ENCODE measurements at regions of chr2 and their contacts with region 1.

Region 1: DNA sequence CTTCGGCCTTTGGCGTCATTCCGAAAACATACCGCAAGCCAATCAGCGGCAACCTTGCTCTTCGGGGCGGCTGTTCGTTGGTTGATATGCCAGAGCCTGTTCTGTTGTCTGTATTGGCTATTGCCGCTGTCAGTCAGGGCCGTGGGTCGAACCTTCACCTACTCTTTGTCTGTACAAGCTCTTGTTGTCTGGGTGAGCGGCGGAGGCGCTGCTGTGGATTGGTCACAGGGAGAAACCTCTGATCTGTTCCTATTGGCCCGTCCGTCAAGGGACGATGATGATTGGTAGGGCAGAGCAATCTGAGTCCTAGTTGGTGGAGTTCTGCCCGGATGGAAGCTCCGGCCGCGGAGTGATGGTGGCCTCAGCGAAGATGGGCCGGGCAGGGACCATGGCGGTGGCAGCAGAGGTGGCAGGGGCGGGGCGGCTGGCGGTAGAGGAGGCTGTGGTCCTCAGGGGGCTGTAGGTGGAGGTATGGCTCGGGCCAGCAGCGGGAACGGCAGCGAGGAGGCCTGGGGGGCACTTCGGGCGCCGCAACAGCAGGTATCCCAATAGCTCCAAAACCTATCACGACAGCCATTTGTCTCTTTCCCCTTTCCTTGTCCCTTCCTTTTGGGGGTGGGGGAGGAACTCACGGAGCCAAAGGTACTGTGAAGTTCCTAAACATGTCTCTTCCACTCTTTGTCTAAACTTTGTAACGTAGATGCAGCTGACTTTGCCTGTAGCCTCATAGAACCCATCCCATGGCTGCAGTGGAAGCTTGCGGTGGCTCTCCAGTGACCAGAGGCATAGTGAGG is at the start of gene WBP1:
- DNase-seq: peak; percentile 93
- ATAC-seq: peak; percentile 89
- H3K4me3 Mint-ChIP-seq: peak within 1 kb of the TSS; percentile 99
- H3K27ac Mint-ChIP-seq: peak within 1 kb of the TSS; percentile 93
- H3K4me1 Mint-ChIP-seq: peaks cover 48% of the 10 kb centered on the region
- H3K27me3 Mint-ChIP-seq: no peaks in the 10 kb centered on the region
- total RNA-seq, gene WBP1: 66.8 to 69.6 TPM

Region 2: GRCh38 chr2:74080346-74080745 is 378.0 kb before region 1 on chr2:
- POLR2A ChIA-PET with region 1: no interaction called
- DNase-seq: no peak
- ATAC-seq: no peak
- H3K4me3 Mint-ChIP-seq: no peak overlapping the region
- H3K27ac Mint-ChIP-seq: no peak overlapping the region
- H3K4me1 Mint-ChIP-seq: peaks cover 4% of the 10 kb centered on the region
- H3K27me3 Mint-ChIP-seq: no peaks in the 10 kb centered on the region

Region 3: DNA sequence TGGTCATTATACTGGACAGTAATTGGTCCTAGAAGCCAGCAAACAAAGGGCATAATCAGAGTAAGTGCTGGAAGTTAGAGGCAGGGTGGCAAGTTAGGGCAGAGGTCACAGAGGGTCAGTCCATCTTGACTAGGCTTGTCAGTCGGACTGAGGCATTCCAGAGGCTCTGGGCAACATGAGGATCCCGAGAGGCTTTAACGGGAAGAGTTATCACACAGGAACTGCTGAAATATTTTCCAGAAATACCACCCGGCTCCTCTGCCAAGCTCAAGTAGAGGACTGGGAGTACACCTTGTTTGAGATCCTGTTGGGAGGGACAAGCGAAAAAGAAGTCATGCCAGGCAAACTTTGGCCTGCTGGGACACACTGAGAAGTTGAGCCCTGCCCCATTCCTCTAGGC is 50.6 kb before region 1 on chr2:
- POLR2A ChIA-PET with region 1: no interaction called
- DNase-seq: no peak
- ATAC-seq: no peak
- H3K4me3 Mint-ChIP-seq: no peak overlapping the region
- H3K27ac Mint-ChIP-seq: no peak overlapping the region
- H3K4me1 Mint-ChIP-seq: peaks cover 4% of the 10 kb centered on the region
- H3K27me3 Mint-ChIP-seq: peaks cover 24% of the 10 kb centered on the region

Region 4: GRCh38 chr2:74421221-74421870 is 37.0 kb before region 1 on chr2 and contains the starts of genes C2orf81 and WDR54:
- POLR2A ChIA-PET with region 1: interaction called, 58 read pairs
- DNase-seq: peak; percentile 99
- ATAC-seq: peak; percentile 80
- H3K4me3 Mint-ChIP-seq: peak within 1 kb of the TSS; percentile 99
- H3K27ac Mint-ChIP-seq: peak within 1 kb of the TSS; percentile 99
- H3K4me1 Mint-ChIP-seq: peaks cover 19% of the 10 kb centered on the region
- H3K27me3 Mint-ChIP-seq: no peaks in the 10 kb centered on the region
- total RNA-seq, gene C2orf81: 3.7 to 5.8 TPM
- total RNA-seq, gene WDR54: 88.9 to 94.4 TPM

Region 5: DNA sequence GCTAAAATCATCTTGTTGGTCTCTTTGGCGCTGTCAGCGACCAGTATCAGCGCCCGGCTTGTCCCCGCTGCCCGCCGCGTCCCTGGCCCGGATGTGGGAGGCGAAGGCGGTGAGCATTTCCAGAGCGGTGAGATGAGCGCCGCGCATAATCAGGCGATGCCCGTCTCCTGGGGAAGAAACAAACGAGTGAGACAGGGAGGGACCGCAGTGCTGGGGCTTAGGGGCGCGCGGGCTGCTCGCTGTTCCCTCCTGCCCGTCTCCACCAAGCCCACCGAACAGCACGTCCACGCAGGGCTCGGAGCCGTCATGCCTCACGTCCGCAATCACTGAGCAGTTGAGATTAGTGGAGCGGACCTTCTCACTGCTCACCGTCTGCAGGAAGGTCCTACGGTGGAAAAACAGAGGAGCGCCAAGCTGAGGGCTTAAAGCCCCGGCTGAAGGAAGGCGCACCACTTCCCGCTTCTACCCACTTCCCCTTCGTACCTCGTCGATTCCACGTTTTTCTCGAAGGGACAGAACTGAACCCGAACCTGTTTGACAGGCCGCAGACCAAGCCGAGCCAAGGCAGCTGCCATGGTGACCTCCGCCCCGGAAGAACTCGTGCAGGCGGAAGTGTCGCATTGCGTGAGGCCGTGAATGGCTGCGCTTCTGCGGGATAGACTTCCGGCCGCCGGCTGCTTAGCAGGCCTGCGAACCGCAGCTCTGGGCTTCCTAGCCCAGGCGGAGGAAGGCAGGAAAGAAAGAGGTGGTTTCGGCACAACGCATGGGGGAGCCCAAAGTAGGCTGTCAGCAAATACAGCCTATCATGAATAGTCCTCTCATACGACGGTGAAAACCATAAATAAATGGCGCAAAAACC is 14.0 kb after region 1 on chr2 and contains the start of gene MRPL53:
- POLR2A ChIA-PET with region 1: interaction called, 52 read pairs
- DNase-seq: peak; percentile 98
- ATAC-seq: peak; percentile 92
- H3K4me3 Mint-ChIP-seq: peak within 1 kb of the TSS; percentile 93
- H3K27ac Mint-ChIP-seq: peak within 1 kb of the TSS; percentile 91
- H3K4me1 Mint-ChIP-seq: peaks cover 14% of the 10 kb centered on the region
- H3K27me3 Mint-ChIP-seq: no peaks in the 10 kb centered on the region
- total RNA-seq, gene MRPL53: 91.6 to 92.1 TPM

Region 6: GRCh38 chr2:74488644-74489481 is 30.5 kb after region 1 on chr2:
- POLR2A ChIA-PET with region 1: no interaction called
- DNase-seq: no peak
- ATAC-seq: no peak
- H3K4me3 Mint-ChIP-seq: no peak overlapping the region
- H3K27ac Mint-ChIP-seq: no peak overlapping the region
- H3K4me1 Mint-ChIP-seq: peaks cover 11% of the 10 kb centered on the region
- H3K27me3 Mint-ChIP-seq: no peaks in the 10 kb centered on the region

Region 7: DNA sequence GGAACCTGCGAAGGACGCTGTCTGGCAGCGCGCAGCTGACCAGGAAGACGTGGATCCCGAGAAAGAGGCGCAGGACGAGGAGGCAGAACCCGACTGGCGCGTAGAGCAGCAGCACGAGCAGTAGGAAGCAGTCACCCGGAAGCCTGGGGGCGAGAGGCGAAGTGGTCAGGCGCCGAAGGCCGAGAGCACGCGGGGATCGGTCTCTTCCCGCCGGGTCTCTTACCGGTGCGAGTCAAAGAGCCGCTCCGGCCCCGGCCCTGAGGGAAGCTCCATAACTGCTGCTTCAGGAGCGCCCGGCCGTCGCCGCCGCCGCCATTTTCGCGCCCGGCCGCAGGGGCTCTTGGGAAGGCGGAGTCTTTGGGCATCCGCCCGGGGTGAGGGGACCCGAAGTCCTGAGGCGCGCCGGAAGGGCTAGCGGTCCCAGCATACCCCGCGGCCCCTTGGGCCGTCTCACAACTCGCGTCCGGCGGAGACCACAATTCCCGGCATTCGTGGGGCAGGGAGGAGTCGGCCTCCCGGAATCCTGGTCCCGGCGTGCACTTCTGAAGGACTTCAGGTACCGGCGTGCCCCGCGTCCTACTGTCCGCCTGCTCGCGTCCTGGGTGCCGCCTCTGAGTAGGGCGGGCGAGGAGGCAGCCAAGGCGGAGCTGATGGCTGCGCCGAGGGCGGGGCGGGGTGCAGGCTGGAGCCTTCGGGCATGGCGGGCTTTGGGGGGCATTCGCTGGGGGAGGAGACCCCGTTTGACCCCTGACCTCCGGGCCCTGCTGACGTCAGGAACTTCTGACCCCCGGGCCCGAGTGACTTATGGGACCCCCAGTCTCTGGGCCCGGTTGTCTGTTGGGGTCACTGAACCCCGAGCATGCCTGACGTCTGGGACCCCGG is 71.3 kb after region 1 on chr2 and contains the starts of genes AUP1 and HTRA2:
- POLR2A ChIA-PET with region 1: interaction called, 39 read pairs
- DNase-seq: peak; percentile 93
- ATAC-seq: peak; percentile 91
- H3K4me3 Mint-ChIP-seq: peak within 1 kb of the TSS; percentile 97
- H3K27ac Mint-ChIP-seq: peak within 1 kb of the TSS; percentile 96
- H3K4me1 Mint-ChIP-seq: peaks cover 38% of the 10 kb centered on the region
- H3K27me3 Mint-ChIP-seq: no peaks in the 10 kb centered on the region
- total RNA-seq, gene AUP1: 126 to 127 TPM
- total RNA-seq, gene HTRA2: 46.6 to 47.4 TPM

Measured in activated naive CD8-positive, alpha-beta T cell treated with anti-CD3 and anti-CD28 coated beads, Interleukin-2, amount 10 ng/mL, durations not matched to agents 7 days and 5 days (primary cell).